Posterior cingulate gyrus (tissue), 11 donors: ENCODE measurements at regions of chr7 and their contacts with region 1.

Region 1: DNA sequence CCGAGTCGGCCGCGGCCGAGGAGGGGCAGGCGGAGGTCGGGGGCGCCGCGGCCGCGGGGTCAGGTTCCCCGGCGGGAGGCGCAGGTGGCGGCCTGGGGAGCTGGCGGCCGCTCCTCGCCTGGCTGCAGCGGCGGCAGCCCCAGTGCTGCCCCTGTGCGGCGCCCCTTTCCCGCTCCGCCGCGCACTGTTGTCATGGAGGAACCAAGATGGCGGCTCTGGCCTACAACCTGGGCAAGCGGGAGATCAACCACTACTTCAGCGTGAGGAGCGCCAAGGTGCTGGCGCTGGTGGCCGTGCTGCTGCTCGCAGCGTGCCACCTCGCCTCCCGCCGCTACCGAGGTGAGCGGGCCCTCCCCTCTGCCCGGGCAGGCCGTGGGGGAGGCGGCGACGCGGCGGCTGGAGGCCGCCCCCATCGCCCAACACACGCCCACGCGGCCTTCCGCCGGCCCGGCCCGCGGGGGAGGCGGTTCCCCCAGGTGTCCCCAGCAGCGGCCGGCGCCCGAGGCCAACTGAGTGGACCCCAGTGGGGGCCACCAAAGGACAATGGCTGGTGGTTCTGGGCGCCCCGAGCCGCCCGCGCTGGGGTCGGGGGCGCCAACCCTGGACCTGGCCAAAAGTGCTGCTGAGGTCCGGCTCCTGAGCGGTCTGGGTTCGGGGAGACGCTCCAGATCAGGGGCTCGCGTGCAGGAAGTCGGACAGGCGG is 421 bp downstream of the CASD1 start:
- DNase-seq: peak; percentile 59 to 95 (median 70)

Region 2: DNA sequence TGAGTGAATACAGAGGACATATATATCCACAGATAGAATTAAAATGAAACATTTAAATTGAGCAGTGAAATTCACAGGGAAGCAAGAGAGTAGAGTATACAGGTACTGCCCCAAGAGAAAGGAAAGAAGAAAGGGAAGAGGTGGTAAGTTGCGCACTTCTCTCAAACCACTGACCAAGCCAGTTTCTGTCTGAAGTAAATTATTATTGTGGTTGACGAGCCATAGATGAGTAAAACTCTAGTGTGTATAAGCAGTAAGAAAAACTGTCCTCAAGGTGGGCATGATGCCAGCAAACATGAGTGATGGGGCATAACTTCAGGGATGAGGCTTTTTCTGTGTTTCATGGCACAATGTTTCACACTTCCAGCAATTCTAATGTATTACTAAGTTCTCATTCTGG is 501.5 kb before region 1 on chr7:
- intact Hi-C with region 1: loop called (anchors 5 kb)
- DNase-seq: no peak

Region 3: GRCh38 chr7:95199779-95200558 is 689.9 kb after region 1 on chr7:
- intact Hi-C with region 1: loop called (anchors 10 kb)
- DNase-seq: peak in 8 of 10 donors; percentile 31 to 91 (median 55)

Region 4: GRCh38 chr7:95276114-95276513 is 766.1 kb after region 1 on chr7:
- intact Hi-C with region 1: no loop called
- DNase-seq: no peak